GM12878 (cell line): ENCODE measurements at regions of chr5 and their contacts with region 1.

Region 1: GRCh38 chr5:10635257-10635866 is 71.5 kb downstream of the ANKRD33B start:
- DNase-seq: peak; percentile 94
- ATAC-seq: peak; percentile 66
- H3K4me3 ChIP-seq: peak overlapping the region; percentile 51
- H3K27ac ChIP-seq: peak overlapping the region; percentile 93
- H3K4me1 ChIP-seq: peaks cover 59% of the 10 kb centered on the region
- H3K27me3 ChIP-seq: no peaks in the 10 kb centered on the region
- CTCF ChIP-seq: no peak
- EP300 ChIP-seq: peak; percentile 89 to 98
- POLR2A ChIP-seq: peak; percentile 39; the same call in 1 of the 2 replicates
- RAD21 ChIP-seq: peak; percentile 5; the same call in 1 of the 2 replicates

Region 2: DNA sequence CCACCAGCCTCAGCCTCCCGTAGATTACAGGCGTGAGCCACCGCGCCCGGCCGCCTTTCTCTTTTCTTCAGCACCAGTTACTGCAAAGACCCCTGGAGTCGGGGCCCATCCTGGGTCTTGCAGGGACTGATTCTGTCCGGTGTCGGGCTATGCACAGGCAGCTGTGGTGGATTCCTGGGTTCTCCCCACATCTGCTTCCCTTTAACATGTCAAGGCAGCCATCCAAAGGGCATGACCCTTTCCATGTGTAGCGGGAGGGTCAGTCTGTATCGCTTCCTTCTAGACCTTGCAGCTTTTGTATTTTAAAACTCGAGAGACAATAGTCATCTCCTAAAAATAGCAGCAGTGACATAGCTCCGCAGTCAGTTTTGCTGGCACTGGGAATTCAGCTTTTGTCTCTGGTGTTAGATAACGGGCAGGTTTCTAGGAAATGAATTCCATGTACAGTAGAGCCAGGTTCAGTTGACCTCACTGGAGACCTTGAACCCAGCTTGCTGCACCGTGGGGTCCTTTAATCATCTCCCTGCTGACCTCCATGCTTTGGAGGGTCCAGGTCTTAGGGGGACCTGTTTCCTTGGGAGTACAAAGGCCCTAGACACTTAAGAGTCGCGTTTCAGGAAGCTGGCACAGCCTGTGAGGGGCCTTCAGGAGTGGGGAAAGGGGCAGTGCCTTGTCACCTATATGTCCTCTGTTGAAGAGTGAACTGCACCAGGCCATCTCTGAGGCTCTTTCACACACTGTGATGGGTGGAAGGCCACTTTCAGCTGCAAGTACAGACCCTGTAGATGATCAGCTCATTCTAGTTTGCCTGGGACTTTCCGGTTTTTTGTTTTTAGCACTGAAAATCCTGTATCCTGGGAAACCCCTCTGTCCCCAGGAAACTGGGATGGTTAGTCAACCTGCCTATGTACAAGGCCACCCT is 57.7 kb before region 1 on chr5:
- CTCF ChIA-PET with region 1: interaction called, 83 read pairs
- POLR2A ChIA-PET with region 1: interaction called, 21 read pairs
- RAD21 ChIA-PET with region 1: interaction called, 5 read pairs
- SMC1A ChIA-PET with region 1: interaction called, 51 read pairs
- in situ Hi-C with region 1: no loop called
- intact Hi-C with region 1: loop called (anchors 1 kb)
- DNase-seq: no peak
- ATAC-seq: peak; percentile 68
- H3K4me3 ChIP-seq: peak overlapping the region; percentile 46; the same call in 1 of the 2 replicates
- H3K27ac ChIP-seq: peak overlapping the region; percentile 77
- H3K4me1 ChIP-seq: peaks cover 64% of the 10 kb centered on the region
- H3K27me3 ChIP-seq: no peaks in the 10 kb centered on the region
- CTCF ChIP-seq: no peak
- EP300 ChIP-seq: no peak
- POLR2A ChIP-seq: no peak; the same call in 1 of the 2 replicates
- RAD21 ChIP-seq: no peak

Region 3: GRCh38 chr5:10621832-10622231 is 13.5 kb before region 1 on chr5:
- CTCF ChIA-PET with region 1: interaction called, 157 read pairs
- POLR2A ChIA-PET with region 1: interaction called, 3 read pairs
- RAD21 ChIA-PET with region 1: interaction called, 5 read pairs
- SMC1A ChIA-PET with region 1: interaction called, 14 read pairs
- in situ Hi-C with region 1: no loop called
- intact Hi-C with region 1: no loop called
- DNase-seq: no peak
- ATAC-seq: peak; percentile 17; the same call in 2 of the 3 replicates
- H3K4me3 ChIP-seq: no peak overlapping the region
- H3K27ac ChIP-seq: peak overlapping the region; percentile 47
- H3K4me1 ChIP-seq: peaks cover 27% of the 10 kb centered on the region
- H3K27me3 ChIP-seq: no peaks in the 10 kb centered on the region
- CTCF ChIP-seq: no peak
- EP300 ChIP-seq: no peak
- POLR2A ChIP-seq: no peak
- RAD21 ChIP-seq: no peak

Region 4: DNA sequence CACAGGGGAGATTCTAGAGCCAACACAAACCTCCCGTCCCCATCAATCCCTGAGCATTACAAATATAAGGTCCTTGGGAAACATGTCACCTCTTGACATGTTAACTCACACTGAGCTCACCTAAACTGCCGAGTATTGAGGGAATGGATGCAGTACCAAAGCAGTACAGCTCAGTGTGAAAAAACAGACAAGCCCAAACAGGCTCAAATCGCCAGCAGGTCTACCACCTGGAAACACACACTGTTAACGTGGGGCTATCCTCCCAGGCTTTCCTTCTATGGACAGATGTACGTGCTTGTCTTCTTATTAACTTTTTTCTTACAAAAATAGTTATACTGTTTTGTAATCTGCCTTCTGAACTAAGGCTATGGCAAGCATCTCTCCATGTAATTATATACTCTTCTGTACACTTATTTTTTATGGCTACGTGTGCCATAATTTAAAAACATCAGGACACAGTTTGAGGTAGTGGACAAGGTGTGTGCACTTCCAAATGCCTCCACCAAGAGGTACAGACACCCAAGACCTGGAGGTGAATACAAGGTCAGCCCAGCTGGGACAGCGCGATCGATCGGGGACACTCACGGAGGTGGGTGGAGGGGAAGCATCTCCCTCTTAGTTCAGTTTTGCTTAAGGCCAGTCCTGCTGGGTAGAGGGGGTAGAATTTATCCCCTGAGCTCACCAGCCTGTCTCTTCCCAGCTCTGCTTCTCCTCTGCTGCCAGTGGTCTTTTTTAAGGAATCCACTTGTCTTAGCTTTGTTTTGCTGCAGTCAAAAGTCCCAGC is 49.1 kb after region 1 on chr5:
- CTCF ChIA-PET with region 1: interaction called, 34 read pairs
- POLR2A ChIA-PET with region 1: interaction called, 39 read pairs
- RAD21 ChIA-PET with region 1: interaction called, 93 read pairs
- SMC1A ChIA-PET with region 1: interaction called, 90 read pairs
- in situ Hi-C with region 1: no loop called
- intact Hi-C with region 1: loop called (anchors 1 kb)
- DNase-seq: no peak
- ATAC-seq: peak; percentile 76
- H3K4me3 ChIP-seq: 0 out of 2 replicates have a peak overlapping the region, but pooled peaks have one; percentile 17
- H3K27ac ChIP-seq: peak overlapping the region; percentile 88
- H3K4me1 ChIP-seq: peaks cover 23% of the 10 kb centered on the region
- H3K27me3 ChIP-seq: no peaks in the 10 kb centered on the region
- CTCF ChIP-seq: no peak
- EP300 ChIP-seq: no peak
- POLR2A ChIP-seq: no peak
- RAD21 ChIP-seq: no peak

Region 5: DNA sequence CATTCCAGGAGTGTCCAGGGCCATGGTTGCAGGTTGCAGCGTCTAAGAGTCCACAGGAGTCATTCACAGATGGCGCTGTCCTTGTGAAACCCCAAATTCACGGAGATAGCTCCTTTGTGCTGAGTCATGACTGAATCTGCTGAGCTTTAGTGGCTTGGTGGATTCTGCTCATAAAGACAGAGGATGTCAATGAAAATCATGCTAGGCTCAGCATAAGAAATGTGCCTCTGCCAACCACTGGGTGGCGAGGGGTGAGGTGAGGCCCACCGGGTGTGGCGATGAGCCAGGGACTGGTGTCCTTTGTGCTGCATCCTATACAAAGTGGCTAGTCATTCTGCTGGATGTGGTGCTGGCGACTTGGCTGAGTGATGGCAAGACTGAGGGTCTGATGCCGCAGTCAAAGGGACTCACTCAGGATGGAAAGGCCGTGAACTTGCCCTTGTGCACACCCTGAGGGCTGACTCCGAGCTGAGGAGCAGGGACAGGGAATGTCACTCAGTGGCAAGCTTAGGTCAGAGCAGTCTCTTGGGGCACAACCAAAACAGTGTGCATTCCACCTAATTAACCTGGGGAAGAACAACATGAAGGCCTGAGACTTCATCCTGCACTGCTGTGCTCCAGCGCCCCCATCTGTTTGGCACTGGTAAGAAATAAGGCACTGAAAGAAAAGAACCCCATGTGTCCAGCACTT is 54.2 kb after region 1 on chr5:
- CTCF ChIA-PET with region 1: interaction called, 34 read pairs
- POLR2A ChIA-PET with region 1: interaction called, 39 read pairs
- RAD21 ChIA-PET with region 1: interaction called, 93 read pairs
- SMC1A ChIA-PET with region 1: interaction called, 90 read pairs
- in situ Hi-C with region 1: no loop called
- intact Hi-C with region 1: loop called (anchors 1 kb)
- DNase-seq: no peak
- ATAC-seq: peak; percentile 75
- H3K4me3 ChIP-seq: no peak overlapping the region
- H3K27ac ChIP-seq: no peak overlapping the region
- H3K4me1 ChIP-seq: peaks cover 19% of the 10 kb centered on the region
- H3K27me3 ChIP-seq: no peaks in the 10 kb centered on the region
- CTCF ChIP-seq: peak; percentile 36 to 79 (median 67); a peak in 5 of 6 replicates
- EP300 ChIP-seq: no peak
- POLR2A ChIP-seq: no peak
- RAD21 ChIP-seq: peak; percentile 76

Region 6: GRCh38 chr5:10761166-10761932 is 126.0 kb after region 1 on chr5 and contains the start of gene DAP:
- CTCF ChIA-PET with region 1: no interaction called
- POLR2A ChIA-PET with region 1: interaction called, 5 read pairs
- RAD21 ChIA-PET with region 1: interaction called, 3 read pairs
- SMC1A ChIA-PET with region 1: no interaction called
- in situ Hi-C with region 1: no loop called
- intact Hi-C with region 1: loop called (anchors 2 kb)
- DNase-seq: peak; percentile 63
- ATAC-seq: peak; percentile 71
- H3K4me3 ChIP-seq: peak within 1 kb of the TSS; percentile 91
- H3K27ac ChIP-seq: peak within 1 kb of the TSS; percentile 82
- H3K4me1 ChIP-seq: peaks cover 13% of the 10 kb centered on the region
- H3K27me3 ChIP-seq: no peaks in the 10 kb centered on the region
- CTCF ChIP-seq: no peak
- EP300 ChIP-seq: no peak
- POLR2A ChIP-seq: peak; percentile 87
- RAD21 ChIP-seq: no peak
- polyA plus RNA-seq, gene DAP: 12.9 to 18.1 TPM

Region 7: GRCh38 chr5:11547745-11548144 is 912.4 kb after region 1 on chr5:
- CTCF ChIA-PET with region 1: no interaction called
- POLR2A ChIA-PET with region 1: no interaction called
- RAD21 ChIA-PET with region 1: no interaction called
- SMC1A ChIA-PET with region 1: no interaction called
- in situ Hi-C with region 1: no loop called
- intact Hi-C with region 1: no loop called
- DNase-seq: no peak
- ATAC-seq: no peak
- H3K4me3 ChIP-seq: no peak overlapping the region
- H3K27ac ChIP-seq: no peak overlapping the region
- H3K4me1 ChIP-seq: no peaks in the 10 kb centered on the region
- H3K27me3 ChIP-seq: no peaks in the 10 kb centered on the region
- CTCF ChIP-seq: no peak
- EP300 ChIP-seq: no peak
- POLR2A ChIP-seq: no peak
- RAD21 ChIP-seq: no peak